ENCODE measurements at regions of chr2 and their contacts with region 1.

Region 1: DNA sequence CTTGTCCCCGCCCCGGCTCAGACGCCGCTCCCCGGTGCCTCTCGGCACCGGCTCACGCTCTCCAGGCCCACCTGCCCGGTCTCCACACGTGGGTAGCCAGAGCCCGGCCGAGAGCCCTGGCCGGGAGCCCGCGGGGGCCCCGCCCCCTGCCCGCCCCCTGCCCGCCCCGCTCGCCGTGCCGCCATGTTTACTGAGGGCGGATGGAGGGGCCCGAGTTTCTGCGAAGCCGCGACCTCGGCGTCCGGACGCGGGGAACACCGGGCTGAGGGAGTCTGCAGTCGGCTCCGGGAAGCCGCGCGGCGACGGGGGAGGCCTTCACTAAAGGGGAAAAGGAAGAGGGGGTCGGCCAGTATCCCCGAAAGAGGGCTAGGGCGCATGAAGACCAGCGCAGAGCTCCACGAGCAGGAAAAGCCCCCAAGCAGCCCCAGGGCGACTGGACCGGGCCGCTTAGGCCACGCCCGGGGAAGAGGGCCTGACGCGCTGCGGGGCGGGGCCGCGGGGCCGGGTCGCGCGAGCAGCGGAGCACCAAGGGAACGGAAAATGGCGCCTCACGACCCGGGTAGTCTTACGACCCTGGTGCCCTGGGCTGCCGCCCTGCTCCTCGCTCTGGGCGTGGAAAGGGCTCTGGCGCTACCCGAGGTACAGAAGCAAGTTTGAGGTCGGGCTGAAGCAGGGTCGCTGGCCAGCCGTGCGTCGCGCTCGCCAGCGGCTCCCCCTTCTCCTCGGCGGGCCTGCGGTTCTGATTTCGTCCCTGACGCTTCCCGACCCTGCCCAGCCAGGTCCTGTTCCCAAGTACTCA is at the starts of genes ATRAID and SLC5A6:
- DNase-seq: peak; percentile 81
- ATAC-seq: peak; percentile 96
- H3K4me3 ChIP-seq: peak within 1 kb of the TSS; percentile 96
- H3K27ac ChIP-seq: peak within 1 kb of the TSS; percentile 99
- H3K4me1 ChIP-seq: peaks cover 8% of the 10 kb centered on the region
- H3K27me3 ChIP-seq: no peaks in the 10 kb centered on the region
- CTCF ChIP-seq: no peak
- POLR2A ChIP-seq: peak; percentile 89
- RAD21 ChIP-seq: no peak
- total RNA-seq, gene ATRAID: 138 and 144 TPM in 2 replicates
- total RNA-seq, gene SLC5A6: 34.2 and 38.6 TPM in 2 replicates

Region 2: GRCh38 chr2:27281855-27282559 is 70.0 kb after region 1 on chr2 and contains the start of gene TRIM54:
- CTCF ChIA-PET with region 1: no interaction called
- POLR2A ChIA-PET with region 1: no interaction called
- dilution Hi-C with region 1: no loop called
- in situ Hi-C with region 1: no loop called
- intact Hi-C with region 1: loop called (anchors 2 kb)
- DNase-seq: peak; percentile 33
- ATAC-seq: 0 out of 2 replicates have a peak, but pooled peaks have one; percentile 13
- H3K4me3 ChIP-seq: no peak within 1 kb of the TSS
- H3K27ac ChIP-seq: no peak within 1 kb of the TSS
- H3K4me1 ChIP-seq: peaks cover 29% of the 10 kb centered on the region
- H3K27me3 ChIP-seq: peaks cover 10% of the 10 kb centered on the region
- CTCF ChIP-seq: no peak
- POLR2A ChIP-seq: no peak
- RAD21 ChIP-seq: no peak
- total RNA-seq, gene TRIM54: under 0.01 TPM in 1 of 2 replicates, not detected in the other